GM12878 (cell line): ENCODE measurements at regions of chr6 and their contacts with region 1.

Region 1: DNA sequence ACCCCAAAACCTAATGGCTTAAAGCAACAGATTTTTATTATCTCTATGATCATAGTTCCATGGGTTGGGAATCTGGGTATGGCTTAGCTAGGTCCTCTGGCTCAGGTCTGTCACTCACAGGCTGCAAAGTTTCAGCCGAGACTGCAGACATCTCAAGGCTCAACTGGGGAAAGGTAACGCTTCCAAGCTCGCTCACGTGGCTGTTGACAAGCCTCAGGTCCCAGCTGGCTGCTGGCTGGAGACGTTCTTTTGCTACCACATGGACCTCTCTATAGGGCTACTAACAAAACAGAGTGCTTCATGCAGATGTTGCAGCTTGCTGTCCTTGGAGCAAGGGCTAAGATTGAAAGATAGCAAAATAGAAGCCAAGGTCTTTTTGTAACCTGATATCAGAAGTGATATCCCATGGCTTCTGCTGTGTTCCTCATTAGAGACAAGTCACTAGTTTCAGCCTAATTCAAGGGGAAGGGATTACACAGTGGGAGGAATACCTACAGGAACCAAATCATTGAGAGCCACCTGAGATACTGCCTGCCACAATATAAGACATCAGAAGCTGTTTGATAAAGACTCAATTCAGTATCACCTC is 6.6 kb downstream of the HTR1E start:
- DNase-seq: no peak
- ATAC-seq: no peak
- H3K4me3 ChIP-seq: no peak overlapping the region
- H3K27ac ChIP-seq: no peak overlapping the region
- H3K4me1 ChIP-seq: no peaks in the 10 kb centered on the region
- H3K27me3 ChIP-seq: no peaks in the 10 kb centered on the region
- CTCF ChIP-seq: no peak
- EP300 ChIP-seq: no peak
- POLR2A ChIP-seq: no peak
- RAD21 ChIP-seq: no peak

Region 2: GRCh38 chr6:86888301-86888700 is 55.6 kb before region 1 on chr6:
- CTCF ChIA-PET with region 1: no interaction called
- POLR2A ChIA-PET with region 1: no interaction called
- RAD21 ChIA-PET with region 1: no interaction called
- SMC1A ChIA-PET with region 1: no interaction called
- in situ Hi-C with region 1: no loop called
- intact Hi-C with region 1: no loop called
- DNase-seq: no peak
- ATAC-seq: no peak
- H3K4me3 ChIP-seq: no peak overlapping the region
- H3K27ac ChIP-seq: no peak overlapping the region
- H3K4me1 ChIP-seq: no peaks in the 10 kb centered on the region
- H3K27me3 ChIP-seq: no peaks in the 10 kb centered on the region
- CTCF ChIP-seq: no peak
- EP300 ChIP-seq: no peak
- POLR2A ChIP-seq: no peak
- RAD21 ChIP-seq: no peak

Region 3: DNA sequence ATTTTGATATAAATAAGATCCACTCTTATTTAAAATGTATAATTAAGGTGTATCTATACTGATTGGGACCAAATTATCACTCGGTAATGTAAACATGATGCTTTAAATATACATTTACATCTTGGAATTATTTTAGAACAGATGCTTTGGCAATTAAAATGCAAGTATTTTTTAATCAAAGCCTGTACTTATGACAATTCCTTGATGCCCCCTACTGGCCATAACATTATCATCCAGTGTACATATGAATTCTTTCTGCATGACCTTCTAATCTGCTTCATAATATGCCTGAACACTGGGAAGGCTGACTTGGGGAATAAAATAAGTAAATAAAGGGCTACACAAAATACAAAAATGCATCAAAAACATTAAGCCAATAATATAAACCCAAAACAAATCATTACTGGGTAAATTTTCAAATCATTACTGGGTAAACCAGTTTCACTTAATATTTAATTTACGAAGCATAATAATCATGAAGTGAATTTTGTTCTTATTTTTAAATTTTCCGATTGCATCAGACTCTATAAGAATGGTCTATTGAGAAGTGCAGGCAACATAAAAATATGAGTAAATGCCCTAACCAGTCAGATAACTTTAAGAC is 85.9 kb after region 1 on chr6:
- CTCF ChIA-PET with region 1: interaction called, 3 read pairs
- POLR2A ChIA-PET with region 1: no interaction called
- RAD21 ChIA-PET with region 1: no interaction called
- SMC1A ChIA-PET with region 1: no interaction called
- in situ Hi-C with region 1: no loop called
- intact Hi-C with region 1: loop called (anchors 1 kb)
- DNase-seq: no peak
- ATAC-seq: peak; percentile 70
- H3K4me3 ChIP-seq: no peak overlapping the region
- H3K27ac ChIP-seq: no peak overlapping the region
- H3K4me1 ChIP-seq: no peaks in the 10 kb centered on the region
- H3K27me3 ChIP-seq: peaks cover 0 to 5% of the 10 kb centered on the region in 2 experiments; a peak in 2 of 4 replicates
- CTCF ChIP-seq: peak; percentile 50 to 56 (median 51)
- EP300 ChIP-seq: no peak
- POLR2A ChIP-seq: no peak
- RAD21 ChIP-seq: peak; percentile 48